ENCODE measurements at regions of chr10 and their contacts with region 1.

Region 1: DNA sequence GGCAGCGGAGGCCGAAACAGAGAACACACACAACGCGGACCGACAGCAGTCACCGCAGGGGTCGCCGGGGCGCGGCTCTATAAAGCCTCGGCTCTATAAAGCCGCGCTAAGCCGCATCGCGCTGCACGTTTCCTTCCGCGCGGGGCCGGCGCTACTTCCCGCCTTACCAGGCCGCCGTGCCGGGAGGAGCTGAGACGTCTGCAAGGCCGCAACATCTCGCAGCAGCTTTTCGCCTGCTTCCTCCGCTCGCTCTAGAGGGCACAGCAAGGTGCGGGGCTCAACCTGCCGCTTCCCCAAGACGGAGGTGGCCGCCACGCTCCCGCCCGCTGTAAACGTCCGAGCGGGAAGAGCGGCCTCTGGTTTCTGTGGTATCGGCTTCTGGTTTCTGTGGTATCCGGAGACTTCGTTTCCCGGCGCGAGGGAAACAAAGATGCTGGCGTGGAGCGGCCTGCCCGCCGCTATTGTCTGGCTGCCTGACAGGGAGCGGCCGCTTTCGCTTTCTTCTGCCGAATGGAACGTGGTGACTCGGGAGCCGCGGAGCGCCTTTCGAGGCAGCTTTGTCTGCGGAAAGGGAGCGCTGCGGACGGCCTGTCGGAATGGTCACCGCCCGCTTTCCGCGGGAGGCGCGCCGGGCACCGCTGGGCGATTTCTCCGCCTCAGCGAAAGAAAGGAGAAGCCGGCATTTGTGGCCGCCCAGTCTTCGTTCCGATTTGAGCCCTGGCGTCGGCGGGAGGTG is 91.8 kb downstream of the SPAG6 start:
- DNase-seq: peak; percentile 79 to 93 (median 89)
- ATAC-seq: peak; percentile 91
- H3K4me3 ChIP-seq: peak overlapping the region; percentile 85
- H3K4me3 Mint-ChIP-seq: peak overlapping the region; percentile 90 to 97 (median 96)
- H3K27ac ChIP-seq: peak overlapping the region; percentile 88
- H3K27ac Mint-ChIP-seq: peak overlapping the region; percentile 96 to 98 (median 98)
- H3K4me1 ChIP-seq: peaks cover 10 to 19% of the 10 kb centered on the region in 2 donors
- H3K4me1 Mint-ChIP-seq: peaks cover 12 to 44% (median 35%) of the 10 kb centered on the region in 7 donors
- H3K27me3 ChIP-seq: no peaks in the 10 kb centered on the region
- H3K27me3 Mint-ChIP-seq: peaks cover 0 to 22% (median 0%) of the 10 kb centered on the region in 5 donors

Region 2: GRCh38 chr10:21533467-21534279 is 903.4 kb before region 1 on chr10 and contains the start of gene MLLT10:
- CTCF ChIA-PET with region 1: no interaction called
- POLR2A ChIA-PET with region 1: interaction called, 3 read pairs
- intact Hi-C with region 1: loop called (anchors 2 to 5 kb)
- DNase-seq: peak; percentile 90 to 96 (median 94)
- ATAC-seq: peak; percentile 95
- H3K4me3 ChIP-seq: peak within 1 kb of the TSS; percentile 81
- H3K4me3 Mint-ChIP-seq: peak within 1 kb of the TSS; percentile 90 to 98 (median 97)
- H3K27ac ChIP-seq: peak within 1 kb of the TSS; percentile 83
- H3K27ac Mint-ChIP-seq: peak within 1 kb of the TSS; percentile 91 to 98 (median 97)
- H3K4me1 ChIP-seq: peaks cover 8 to 15% of the 10 kb centered on the region in 2 donors
- H3K4me1 Mint-ChIP-seq: peaks cover 14 to 36% (median 27%) of the 10 kb centered on the region in 7 donors
- H3K27me3 ChIP-seq: no peaks in the 10 kb centered on the region
- H3K27me3 Mint-ChIP-seq: peaks cover 0 to 18% (median 0%) of the 10 kb centered on the region in 5 donors
- total RNA-seq, gene MLLT10: 50.0 to 74.2 (median 67.9) TPM

Region 3: GRCh38 chr10:22228943-22229801 is 207.9 kb before region 1 on chr10:
- CTCF ChIA-PET with region 1: no interaction called
- POLR2A ChIA-PET with region 1: interaction called, 38 read pairs
- intact Hi-C with region 1: loop called (anchors 1 kb)
- DNase-seq: peak; percentile 74 to 94 (median 92)
- ATAC-seq: peak; percentile 95
- H3K4me3 ChIP-seq: peak overlapping the region; percentile 85
- H3K4me3 Mint-ChIP-seq: peak overlapping the region; percentile 84 to 99 (median 94)
- H3K27ac ChIP-seq: peak overlapping the region; percentile 70
- H3K27ac Mint-ChIP-seq: peak overlapping the region; percentile 96 to 100 (median 99)
- H3K4me1 ChIP-seq: peaks cover 6 to 8% of the 10 kb centered on the region in 2 donors
- H3K4me1 Mint-ChIP-seq: peaks cover 11 to 27% (median 15%) of the 10 kb centered on the region in 7 donors
- H3K27me3 ChIP-seq: no peaks in the 10 kb centered on the region
- H3K27me3 Mint-ChIP-seq: peaks cover 0 to 20% (median 5%) of the 10 kb centered on the region in 5 donors

Region 4: DNA sequence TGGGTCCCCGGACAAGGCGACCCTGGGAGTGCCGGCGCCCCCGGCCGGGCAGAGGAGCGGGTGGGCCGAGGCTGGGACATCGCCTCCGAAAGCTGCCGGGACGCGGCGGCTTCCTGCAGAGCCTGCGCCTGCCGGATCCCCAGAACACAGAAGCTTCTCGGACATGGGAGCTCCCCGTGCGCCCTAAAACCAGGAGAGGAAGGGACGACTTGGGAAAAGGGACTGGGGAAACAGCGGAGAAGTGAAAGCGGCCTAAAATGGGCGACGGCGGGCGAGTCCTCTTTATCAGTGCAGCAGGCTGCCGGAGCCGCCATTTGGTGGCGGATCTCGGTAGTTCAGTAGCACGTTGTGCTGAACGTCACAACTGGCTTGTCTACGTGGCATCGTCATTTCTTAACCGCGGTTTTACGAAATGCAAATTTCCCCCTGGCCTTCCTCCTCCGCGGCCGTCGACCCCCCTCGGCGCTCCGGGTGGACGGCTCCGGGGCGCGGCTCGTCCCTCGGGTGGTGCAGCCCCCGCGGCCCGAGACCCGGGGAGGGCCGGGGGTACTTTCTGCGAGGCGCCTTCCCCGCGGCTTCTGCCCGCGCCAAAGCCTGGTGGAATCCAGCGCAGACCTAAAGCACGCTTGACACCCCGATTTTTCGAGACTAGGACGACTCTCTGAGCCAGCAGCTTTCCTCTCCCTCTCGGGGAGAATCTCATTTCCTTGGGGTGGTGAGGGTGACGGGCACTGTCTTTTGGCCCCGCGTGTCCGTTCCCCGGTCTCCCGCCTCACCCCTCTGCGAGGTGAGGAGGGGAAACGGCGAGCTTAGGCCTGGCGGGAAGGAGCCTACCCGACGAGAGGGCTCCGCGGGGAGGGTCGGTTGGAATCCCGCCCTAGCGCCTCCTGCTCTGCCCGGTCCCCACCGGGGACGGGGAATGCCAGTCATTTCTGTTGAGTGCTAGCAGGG is 101.6 kb before region 1 on chr10:
- CTCF ChIA-PET with region 1: no interaction called
- POLR2A ChIA-PET with region 1: interaction called, 20 read pairs
- intact Hi-C with region 1: loop called in 1 of 2 experiments (anchors 2 kb)
- DNase-seq: peak; percentile 51 to 83 (median 77)
- ATAC-seq: peak; percentile 90
- H3K4me3 ChIP-seq: peak overlapping the region; percentile 57
- H3K4me3 Mint-ChIP-seq: peak overlapping the region; percentile 82 to 91 (median 87)
- H3K27ac ChIP-seq: peak overlapping the region; percentile 63
- H3K27ac Mint-ChIP-seq: peak overlapping the region; percentile 84 to 95 (median 92)
- H3K4me1 ChIP-seq: peaks cover 37 to 38% of the 10 kb centered on the region in 2 donors
- H3K4me1 Mint-ChIP-seq: peaks cover 7 to 55% (median 35%) of the 10 kb centered on the region in 7 donors
- H3K27me3 ChIP-seq: peaks cover 25 to 47% of the 10 kb centered on the region in 2 donors
- H3K27me3 Mint-ChIP-seq: peaks cover 30 to 57% (median 52%) of the 10 kb centered on the region in 5 donors

Region 5: GRCh38 chr10:22550732-22551131 is 113.7 kb after region 1 on chr10:
- CTCF ChIA-PET with region 1: no interaction called
- POLR2A ChIA-PET with region 1: interaction called, 4 read pairs
- intact Hi-C with region 1: loop called in 1 of 2 experiments (anchors 2 kb)
- DNase-seq: peak; percentile 46 to 76 (median 61)
- ATAC-seq: peak; percentile 73
- H3K4me3 ChIP-seq: no peak overlapping the region
- H3K4me3 Mint-ChIP-seq: no peak overlapping the region
- H3K27ac ChIP-seq: no peak overlapping the region
- H3K27ac Mint-ChIP-seq: peak overlapping the region in 7 of 9 donors; percentile 10 to 83 (median 61)
- H3K4me1 ChIP-seq: no peaks in the 10 kb centered on the region
- H3K4me1 Mint-ChIP-seq: peaks cover 0 to 21% (median 13%) of the 10 kb centered on the region in 7 donors
- H3K27me3 ChIP-seq: no peaks in the 10 kb centered on the region
- H3K27me3 Mint-ChIP-seq: no peaks in the 10 kb centered on the region

Region 6: GRCh38 chr10:22714479-22715289 is 277.6 kb after region 1 on chr10 and contains the start of gene PIP4K2A:
- CTCF ChIA-PET with region 1: no interaction called
- POLR2A ChIA-PET with region 1: no interaction called
- intact Hi-C with region 1: loop called (anchors 1 to 10 kb)
- DNase-seq: peak; percentile 64 to 84 (median 77)
- ATAC-seq: peak; percentile 90
- H3K4me3 ChIP-seq: peak within 1 kb of the TSS; percentile 89
- H3K4me3 Mint-ChIP-seq: peak within 1 kb of the TSS; percentile 80 to 97 (median 92)
- H3K27ac ChIP-seq: peak within 1 kb of the TSS; percentile 84
- H3K27ac Mint-ChIP-seq: peak within 1 kb of the TSS; percentile 86 to 93 (median 90)
- H3K4me1 ChIP-seq: peaks cover 12 to 22% of the 10 kb centered on the region in 2 donors
- H3K4me1 Mint-ChIP-seq: peaks cover 25 to 38% (median 35%) of the 10 kb centered on the region in 7 donors
- H3K27me3 ChIP-seq: no peaks in the 10 kb centered on the region
- H3K27me3 Mint-ChIP-seq: peaks cover 0 to 6% (median 0%) of the 10 kb centered on the region in 5 donors
- total RNA-seq, gene PIP4K2A: 110 to 152 (median 140) TPM